ENCODE measurements at regions of chr3 and their contacts with region 1.

Region 1: GRCh38 chr3:48556793-48557626 is at the start of gene PFKFB4:
- DNase-seq: peak; percentile 99 to 100 (median 100)

Region 2: GRCh38 chr3:48446425-48447193 is 110.4 kb before region 1 on chr3 and contains the start of gene ATRIP:
- intact Hi-C with region 1: loop called (anchors 5 kb)
- DNase-seq: peak; percentile 85 to 99 (median 92)

Region 3: GRCh38 chr3:48601622-48601994 is 44.6 kb after region 1 on chr3:
- intact Hi-C with region 1: loop called (anchors 5 kb)
- DNase-seq: peak in 8 of 10 donors; percentile 51 to 93 (median 68)

Region 4: GRCh38 chr3:48756640-48757039 is 199.6 kb after region 1 on chr3:
- intact Hi-C with region 1: no loop called
- DNase-seq: peak in 1 of 10 donors; percentile 17

Measured in posterior cingulate gyrus (tissue), 11 donors.